Activated CD4-positive, alpha-beta T cell treated with anti-CD3 and anti-CD28 coated beads for 36 hours (primary cell): ENCODE measurements at regions of chr19 and their contacts with region 1.

Region 1: GRCh38 chr19:13155472-13156359 is 5.5 kb downstream of the IER2 start:
- DNase-seq: peak; percentile 82
- ATAC-seq: peak; percentile 1
- H3K4me3 Mint-ChIP-seq: peak overlapping the region; percentile 87
- H3K27ac Mint-ChIP-seq: peak overlapping the region; percentile 100
- H3K4me1 Mint-ChIP-seq: peaks cover 33% of the 10 kb centered on the region
- H3K27me3 Mint-ChIP-seq: no peaks in the 10 kb centered on the region

Region 2: GRCh38 chr19:13181747-13182388 is 26.2 kb after region 1 on chr19:
- CTCF ChIA-PET with region 1: interaction called, 12 read pairs
- POLR2A ChIA-PET with region 1: interaction called, 4 read pairs
- intact Hi-C with region 1: no loop called
- DNase-seq: peak; percentile 65
- ATAC-seq: peak; percentile 66
- H3K4me3 Mint-ChIP-seq: no peak overlapping the region
- H3K27ac Mint-ChIP-seq: peak overlapping the region; percentile 63
- H3K4me1 Mint-ChIP-seq: peaks cover 27% of the 10 kb centered on the region
- H3K27me3 Mint-ChIP-seq: no peaks in the 10 kb centered on the region

Region 3: GRCh38 chr19:13225973-13226865 is 70.5 kb after region 1 on chr19:
- CTCF ChIA-PET with region 1: no interaction called
- POLR2A ChIA-PET with region 1: no interaction called
- intact Hi-C with region 1: no loop called
- DNase-seq: no peak
- ATAC-seq: no peak
- H3K4me3 Mint-ChIP-seq: no peak overlapping the region
- H3K27ac Mint-ChIP-seq: no peak overlapping the region
- H3K4me1 Mint-ChIP-seq: no peaks in the 10 kb centered on the region
- H3K27me3 Mint-ChIP-seq: peaks cover 2% of the 10 kb centered on the region